ENCODE measurements at regions of chr10 and their contacts with region 1.

Region 1: GRCh38 chr10:30013757-30014156 is 45.6 kb downstream of the JCAD start:
- DNase-seq: no peak
- ATAC-seq: no peak
- H3K4me3 ChIP-seq: no peak overlapping the region
- H3K4me3 Mint-ChIP-seq: no peak overlapping the region
- H3K27ac ChIP-seq: no peak overlapping the region
- H3K27ac Mint-ChIP-seq: no peak overlapping the region
- H3K4me1 ChIP-seq: no peaks in the 10 kb centered on the region
- H3K4me1 Mint-ChIP-seq: no peaks in the 10 kb centered on the region
- H3K27me3 ChIP-seq: peaks cover 3 to 16% of the 10 kb centered on the region in 2 experiments
- H3K27me3 Mint-ChIP-seq: peaks cover 68% of the 10 kb centered on the region
- CTCF ChIP-seq: no peak

Region 2: GRCh38 chr10:30052062-30052461 is 38.3 kb after region 1 on chr10:
- CTCF ChIA-PET with region 1: no interaction called
- POLR2A ChIA-PET with region 1: no interaction called
- intact Hi-C with region 1: loop called in 1 of 2 experiments (anchors 5 kb)
- DNase-seq: no peak
- ATAC-seq: no peak
- H3K4me3 ChIP-seq: no peak overlapping the region
- H3K4me3 Mint-ChIP-seq: no peak overlapping the region
- H3K27ac ChIP-seq: no peak overlapping the region
- H3K27ac Mint-ChIP-seq: no peak overlapping the region
- H3K4me1 ChIP-seq: peaks cover 20% of the 10 kb centered on the region
- H3K4me1 Mint-ChIP-seq: peaks cover 20% of the 10 kb centered on the region
- H3K27me3 ChIP-seq: peaks cover 4 to 23% of the 10 kb centered on the region in 2 experiments
- H3K27me3 Mint-ChIP-seq: peaks cover 57% of the 10 kb centered on the region
- CTCF ChIP-seq: no peak